ENCODE measurements at regions of chr15 and their contacts with region 1.

Region 1: DNA sequence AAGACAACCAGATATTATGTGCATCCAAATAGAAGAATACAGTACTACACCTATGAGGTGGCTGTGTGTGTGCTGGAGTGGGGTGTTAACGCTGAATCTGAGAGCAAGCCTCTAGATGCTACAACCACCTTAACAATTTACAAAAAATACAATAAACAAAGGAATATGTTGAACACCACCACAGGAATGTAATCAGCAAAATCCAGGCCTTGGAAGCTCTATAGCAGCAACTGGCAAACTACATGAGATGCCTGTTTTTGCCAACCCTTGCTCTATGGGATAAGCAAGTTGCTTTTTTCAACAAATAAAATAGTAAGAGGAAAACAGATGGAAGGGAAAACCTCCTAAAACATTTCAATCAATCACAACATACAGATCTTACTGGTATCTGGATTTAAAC is 23.9 kb downstream of the SLTM start:
- DNase-seq: no peak
- ATAC-seq: no peak
- H3K4me3 ChIP-seq: no peak overlapping the region
- H3K27ac ChIP-seq: no peak overlapping the region
- H3K4me1 ChIP-seq: no peaks in the 10 kb centered on the region
- H3K27me3 ChIP-seq: no peaks in the 10 kb centered on the region
- CTCF ChIP-seq: no peak

Region 2: DNA sequence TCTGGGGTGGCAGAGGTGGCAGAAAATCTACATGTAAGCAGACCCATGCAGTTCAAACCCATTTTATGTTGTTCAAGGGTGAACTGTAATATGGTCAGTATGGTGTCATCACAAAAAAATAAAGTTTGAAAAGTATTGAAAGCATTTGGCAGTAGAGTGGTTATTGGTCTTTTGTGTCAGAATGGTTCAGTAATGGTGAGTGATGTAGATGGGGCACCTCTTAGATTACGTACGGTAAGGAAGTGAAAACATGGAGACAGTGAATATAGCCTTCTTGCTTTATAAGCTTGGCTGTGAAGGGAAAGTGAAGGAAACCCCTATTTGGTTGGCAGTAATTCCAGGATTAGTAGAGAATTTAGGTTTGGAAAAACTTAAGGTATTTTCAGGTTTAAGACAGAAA is 178.1 kb after region 1 on chr15:
- CTCF ChIA-PET with region 1: no interaction called
- POLR2A ChIA-PET with region 1: no interaction called
- intact Hi-C with region 1: loop called (anchors 10 kb)
- DNase-seq: no peak
- ATAC-seq: no peak
- H3K4me3 ChIP-seq: no peak overlapping the region
- H3K27ac ChIP-seq: no peak overlapping the region
- H3K4me1 ChIP-seq: no peaks in the 10 kb centered on the region
- H3K27me3 ChIP-seq: no peaks in the 10 kb centered on the region
- CTCF ChIP-seq: no peak